Activated CD4-positive, alpha-beta T cell treated with anti-CD3 and anti-CD28 coated beads for 36 hours (primary cell): ENCODE measurements at regions of chr2 and their contacts with region 1.

Region 1: DNA sequence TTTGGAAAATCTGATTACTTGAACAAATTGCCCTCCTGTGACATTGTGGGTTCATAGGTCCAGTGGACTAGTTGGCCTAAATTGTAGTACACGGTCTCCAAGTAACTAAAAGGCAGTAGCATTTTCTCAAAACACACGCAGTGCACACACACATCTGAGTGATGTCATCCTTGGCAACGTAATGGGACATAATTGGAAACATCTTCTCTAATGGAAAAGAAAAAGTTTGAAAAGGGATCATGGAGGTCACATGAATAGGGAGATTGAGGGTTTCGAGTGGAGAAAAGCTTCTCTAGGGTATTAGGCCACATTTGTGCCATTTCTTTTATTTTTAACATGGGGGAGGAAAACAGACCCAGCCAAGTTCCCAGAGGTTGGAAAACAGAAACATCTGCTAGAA is 93.3 kb downstream of the MAP4K4 start:
- DNase-seq: no peak
- ATAC-seq: no peak
- H3K4me3 Mint-ChIP-seq: no peak overlapping the region
- H3K27ac Mint-ChIP-seq: peak overlapping the region; percentile 33
- H3K4me1 Mint-ChIP-seq: peaks cover 61% of the 10 kb centered on the region
- H3K27me3 Mint-ChIP-seq: no peaks in the 10 kb centered on the region

Region 2: DNA sequence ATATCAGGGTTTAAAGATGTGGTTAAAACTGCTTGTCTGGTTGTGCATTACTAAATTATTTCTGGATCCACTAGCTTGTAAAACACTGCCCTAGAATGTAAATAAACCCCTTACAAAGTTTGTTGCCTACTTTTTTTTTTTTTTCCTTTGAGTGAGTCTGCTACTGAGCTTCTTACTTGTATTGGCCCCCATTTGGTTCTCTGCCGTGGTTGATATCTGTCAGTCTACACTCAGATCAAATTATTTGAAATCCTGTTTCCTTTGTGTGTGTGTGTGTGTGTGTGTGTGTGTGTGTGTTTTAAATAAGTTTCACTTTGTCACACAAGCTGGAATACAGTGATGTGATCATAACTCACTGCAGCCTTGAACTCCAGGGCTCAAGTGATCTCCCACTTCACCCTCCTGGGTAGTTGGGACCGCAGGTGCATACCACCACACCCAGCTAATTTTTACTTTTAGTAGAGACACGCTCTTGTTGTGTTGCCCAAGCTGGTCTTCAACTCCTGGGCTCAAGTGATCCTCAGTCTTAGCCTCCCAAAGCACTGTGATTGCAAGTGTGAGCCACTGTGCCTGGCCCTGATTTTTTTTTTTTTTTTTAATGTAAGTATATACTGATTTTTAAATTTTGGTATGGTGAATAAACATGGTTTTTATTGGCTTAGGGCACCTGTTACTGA is 45.0 kb before region 1 on chr2:
- CTCF ChIA-PET with region 1: interaction called, 3 read pairs
- POLR2A ChIA-PET with region 1: interaction called, 10 read pairs
- intact Hi-C with region 1: no loop called
- DNase-seq: no peak
- ATAC-seq: peak; percentile 37
- H3K4me3 Mint-ChIP-seq: no peak overlapping the region
- H3K27ac Mint-ChIP-seq: peak overlapping the region; percentile 73
- H3K4me1 Mint-ChIP-seq: peaks cover 69% of the 10 kb centered on the region
- H3K27me3 Mint-ChIP-seq: no peaks in the 10 kb centered on the region

Region 3: GRCh38 chr2:101921319-101921952 is 130.6 kb after region 1 on chr2:
- CTCF ChIA-PET with region 1: no interaction called
- POLR2A ChIA-PET with region 1: no interaction called
- intact Hi-C with region 1: no loop called
- DNase-seq: peak; percentile 15
- ATAC-seq: peak; percentile 47
- H3K4me3 Mint-ChIP-seq: no peak overlapping the region
- H3K27ac Mint-ChIP-seq: peak overlapping the region; percentile 63
- H3K4me1 Mint-ChIP-seq: peaks cover 2% of the 10 kb centered on the region
- H3K27me3 Mint-ChIP-seq: peaks cover 5% of the 10 kb centered on the region

Region 4: DNA sequence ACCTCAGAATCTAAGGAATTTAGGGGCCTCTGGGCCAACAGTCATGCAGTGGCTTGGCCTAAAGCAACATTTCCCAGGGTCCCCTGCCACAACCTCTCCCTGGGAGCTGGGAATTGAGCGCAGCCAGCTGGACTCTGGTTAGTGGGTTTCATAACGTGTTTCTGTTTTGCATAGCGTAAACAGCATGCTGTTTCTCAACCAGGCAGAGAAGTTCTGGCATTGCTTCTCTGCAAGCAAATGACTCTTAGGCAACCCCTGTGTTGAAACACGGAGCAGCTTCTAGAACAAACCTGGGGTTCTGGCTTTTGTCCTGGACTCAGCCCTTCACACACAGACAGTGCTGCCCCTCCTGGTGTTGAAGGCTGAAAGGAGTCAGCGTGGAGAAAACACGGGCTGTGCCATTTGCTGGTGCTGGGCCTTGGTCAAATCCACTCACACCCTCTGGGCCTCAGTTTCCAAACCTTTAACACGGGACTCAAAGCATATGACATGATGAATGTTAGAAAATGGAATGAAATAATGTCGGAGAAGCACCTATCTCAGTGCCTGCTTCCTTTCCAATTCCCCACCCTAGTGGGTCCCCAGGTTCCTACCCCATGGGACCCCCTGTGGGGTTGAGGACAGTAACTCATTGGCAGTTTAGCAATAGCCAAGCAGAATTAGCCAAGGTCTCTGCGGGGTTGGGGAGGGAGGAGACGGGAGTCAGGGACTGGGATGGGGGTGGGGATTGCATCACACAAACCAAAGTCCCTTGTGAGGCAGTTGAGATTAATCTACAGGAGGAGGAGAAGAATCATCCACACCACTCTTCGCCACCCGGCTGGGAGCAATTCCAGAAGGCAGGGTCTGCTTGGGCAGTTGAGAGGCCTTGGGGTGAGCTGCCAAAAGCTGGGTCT is 170.7 kb after region 1 on chr2:
- CTCF ChIA-PET with region 1: no interaction called
- POLR2A ChIA-PET with region 1: no interaction called
- intact Hi-C with region 1: no loop called
- DNase-seq: no peak
- ATAC-seq: no peak
- H3K4me3 Mint-ChIP-seq: no peak overlapping the region
- H3K27ac Mint-ChIP-seq: no peak overlapping the region
- H3K4me1 Mint-ChIP-seq: peaks cover 7% of the 10 kb centered on the region
- H3K27me3 Mint-ChIP-seq: no peaks in the 10 kb centered on the region